Transverse colon (tissue), 4 donors: ENCODE measurements at regions of chr5 and their contacts with region 1.

Region 1: DNA sequence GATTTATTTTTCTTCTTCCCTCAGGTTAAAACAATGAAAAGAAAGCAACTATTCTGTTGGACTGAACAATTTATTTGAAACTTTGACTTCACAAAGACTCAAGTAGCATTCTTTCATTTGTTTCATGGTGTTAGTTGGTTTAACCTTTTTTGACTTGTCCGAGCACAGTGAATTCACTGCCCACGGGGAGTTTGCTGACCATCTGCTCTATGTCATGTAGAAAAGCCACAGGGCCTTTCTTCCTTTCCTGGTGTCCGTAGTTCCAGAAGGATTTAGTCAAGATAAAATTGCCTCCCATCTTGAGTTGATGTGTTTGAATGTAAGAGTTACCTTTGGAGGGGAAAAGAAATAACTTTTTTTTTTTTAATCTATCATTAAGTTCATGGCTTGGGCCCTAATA is 55.1 kb upstream of the ZNF608 start:
- DNase-seq: no peak
- H3K4me3 ChIP-seq: no peak overlapping the region
- H3K27ac ChIP-seq: no peak overlapping the region
- H3K4me1 ChIP-seq: peaks cover 0 to 7% (median 3%) of the 10 kb centered on the region in 4 donors
- H3K27me3 ChIP-seq: no peaks in the 10 kb centered on the region
- CTCF ChIP-seq: no peak
- EP300 ChIP-seq: no peak
- POLR2A ChIP-seq: no peak

Region 2: GRCh38 chr5:124902097-124902821 is 100.7 kb after region 1 on chr5:
- in situ Hi-C with region 1: no loop called
- intact Hi-C with region 1: no loop called
- DNase-seq: no peak
- H3K4me3 ChIP-seq: no peak overlapping the region
- H3K27ac ChIP-seq: no peak overlapping the region
- H3K4me1 ChIP-seq: peaks cover 14 to 25% (median 17%) of the 10 kb centered on the region in 4 donors
- H3K27me3 ChIP-seq: no peaks in the 10 kb centered on the region
- CTCF ChIP-seq: no peak
- EP300 ChIP-seq: no peak
- POLR2A ChIP-seq: no peak

Region 3: GRCh38 chr5:125209650-125210049 is 408.1 kb after region 1 on chr5:
- in situ Hi-C with region 1: no loop called
- intact Hi-C with region 1: loop called (anchors 5 kb)
- DNase-seq: no peak
- H3K4me3 ChIP-seq: no peak overlapping the region
- H3K27ac ChIP-seq: no peak overlapping the region
- H3K4me1 ChIP-seq: no peaks in the 10 kb centered on the region
- H3K27me3 ChIP-seq: no peaks in the 10 kb centered on the region
- CTCF ChIP-seq: no peak
- EP300 ChIP-seq: no peak
- POLR2A ChIP-seq: no peak